Activated naive CD4-positive, alpha-beta T cell treated with anti-CD3 and anti-CD28 coated beads for 36 hours (primary cell): ENCODE measurements at regions of chr5 and their contacts with region 1.

Region 1: DNA sequence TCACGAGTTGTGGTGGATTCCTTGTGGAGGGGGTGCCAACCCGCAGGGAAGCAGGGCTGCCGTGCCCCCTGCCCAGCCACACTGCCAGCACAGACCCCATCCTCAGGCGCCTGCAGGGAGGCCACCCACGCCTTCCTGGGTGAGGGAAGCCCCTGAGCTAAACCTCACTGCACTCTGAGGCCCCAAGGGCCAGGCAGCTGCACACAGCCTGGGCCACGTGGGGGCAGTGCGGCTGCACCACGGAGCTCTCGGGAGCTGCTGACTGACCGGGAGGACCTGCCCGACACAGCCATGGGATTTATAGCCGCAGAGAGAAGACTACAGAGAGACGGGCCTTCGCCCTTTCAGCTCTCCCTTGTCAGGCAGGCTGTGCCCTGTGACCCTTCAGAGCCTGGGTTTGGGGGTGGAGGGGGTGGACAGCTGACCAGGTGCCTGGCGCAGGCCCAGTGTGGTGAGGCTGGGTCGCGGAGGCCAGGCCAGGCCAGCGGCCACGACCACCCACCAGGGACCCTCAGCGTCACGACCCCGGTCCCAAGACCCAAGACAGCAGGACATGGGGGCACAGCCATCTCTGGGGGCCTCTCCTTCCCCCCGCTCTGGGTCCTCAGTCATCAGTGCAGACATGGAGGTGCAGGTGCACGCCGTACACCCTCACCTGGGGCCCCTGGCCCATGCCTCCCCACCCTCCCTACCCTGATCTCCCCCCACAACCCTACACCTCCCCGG is 4.3 kb upstream of the AHRR start:
- DNase-seq: peak; percentile 62
- H3K4me3 Mint-ChIP-seq: no peak overlapping the region
- H3K27ac Mint-ChIP-seq: no peak overlapping the region
- H3K4me1 Mint-ChIP-seq: peaks cover 4% of the 10 kb centered on the region
- H3K27me3 Mint-ChIP-seq: peaks cover 15% of the 10 kb centered on the region

Region 2: DNA sequence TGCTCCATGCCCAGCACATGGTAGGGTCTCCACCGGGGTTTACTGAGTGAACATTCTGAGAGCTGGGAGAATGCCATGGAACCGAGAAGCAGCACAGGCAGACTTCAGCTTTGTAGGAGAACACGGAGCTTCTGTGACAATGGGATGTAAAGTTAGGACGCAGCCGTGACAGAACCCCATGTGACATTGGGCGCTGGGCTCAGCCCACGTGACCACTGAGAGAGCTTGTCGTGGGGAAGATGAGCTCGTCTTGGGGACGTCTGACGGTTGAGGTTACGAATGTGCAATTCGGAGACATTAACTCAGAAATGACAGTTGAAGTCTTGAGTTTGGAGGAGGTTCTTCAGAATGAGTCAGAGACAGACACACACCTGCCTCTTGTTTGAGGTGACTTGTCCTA is 85.6 kb before region 1 on chr5:
- CTCF ChIA-PET with region 1: no interaction called
- intact Hi-C with region 1: no loop called
- DNase-seq: no peak
- H3K4me3 Mint-ChIP-seq: no peak overlapping the region
- H3K27ac Mint-ChIP-seq: peak overlapping the region; percentile 13
- H3K4me1 Mint-ChIP-seq: no peaks in the 10 kb centered on the region
- H3K27me3 Mint-ChIP-seq: no peaks in the 10 kb centered on the region

Region 3: GRCh38 chr5:343461-344401 is 26.5 kb after region 1 on chr5:
- CTCF ChIA-PET with region 1: interaction called, 3 read pairs
- intact Hi-C with region 1: loop called (anchors 2 kb)
- DNase-seq: peak; percentile 71
- H3K4me3 Mint-ChIP-seq: peak overlapping the region; percentile 53
- H3K27ac Mint-ChIP-seq: no peak overlapping the region
- H3K4me1 Mint-ChIP-seq: peaks cover 10% of the 10 kb centered on the region
- H3K27me3 Mint-ChIP-seq: peaks cover 11% of the 10 kb centered on the region

Region 4: GRCh38 chr5:424301-425110 is 107.3 kb after region 1 on chr5:
- CTCF ChIA-PET with region 1: interaction called, 5 read pairs
- intact Hi-C with region 1: loop called (anchors 1 kb)
- DNase-seq: no peak
- H3K4me3 Mint-ChIP-seq: no peak overlapping the region
- H3K27ac Mint-ChIP-seq: no peak overlapping the region
- H3K4me1 Mint-ChIP-seq: no peaks in the 10 kb centered on the region
- H3K27me3 Mint-ChIP-seq: no peaks in the 10 kb centered on the region

Region 5: GRCh38 chr5:431001-431710 is 113.9 kb after region 1 on chr5:
- CTCF ChIA-PET with region 1: interaction called, 10 read pairs
- intact Hi-C with region 1: loop called (anchors 1 kb)
- DNase-seq: peak; percentile 60
- H3K4me3 Mint-ChIP-seq: no peak overlapping the region
- H3K27ac Mint-ChIP-seq: no peak overlapping the region
- H3K4me1 Mint-ChIP-seq: no peaks in the 10 kb centered on the region
- H3K27me3 Mint-ChIP-seq: no peaks in the 10 kb centered on the region